WTC11 (cell line): ENCODE measurements at regions of chr12 and their contacts with region 1.

Region 1: GRCh38 chr12:52121824-52122539 is 42.5 kb downstream of the SMIM41 start:
- DNase-seq: peak; percentile 84
- ATAC-seq: peak; percentile 4; the same call in 1 of the 2 replicates
- H3K4me3 Mint-ChIP-seq: peak overlapping the region; percentile 50
- H3K27ac Mint-ChIP-seq: no peak overlapping the region
- H3K4me1 Mint-ChIP-seq: peaks cover 84% of the 10 kb centered on the region
- H3K27me3 Mint-ChIP-seq: peaks cover 7% of the 10 kb centered on the region; the same call in 1 of the 2 replicates
- CTCF ChIP-seq: peak; percentile 63

Region 2: DNA sequence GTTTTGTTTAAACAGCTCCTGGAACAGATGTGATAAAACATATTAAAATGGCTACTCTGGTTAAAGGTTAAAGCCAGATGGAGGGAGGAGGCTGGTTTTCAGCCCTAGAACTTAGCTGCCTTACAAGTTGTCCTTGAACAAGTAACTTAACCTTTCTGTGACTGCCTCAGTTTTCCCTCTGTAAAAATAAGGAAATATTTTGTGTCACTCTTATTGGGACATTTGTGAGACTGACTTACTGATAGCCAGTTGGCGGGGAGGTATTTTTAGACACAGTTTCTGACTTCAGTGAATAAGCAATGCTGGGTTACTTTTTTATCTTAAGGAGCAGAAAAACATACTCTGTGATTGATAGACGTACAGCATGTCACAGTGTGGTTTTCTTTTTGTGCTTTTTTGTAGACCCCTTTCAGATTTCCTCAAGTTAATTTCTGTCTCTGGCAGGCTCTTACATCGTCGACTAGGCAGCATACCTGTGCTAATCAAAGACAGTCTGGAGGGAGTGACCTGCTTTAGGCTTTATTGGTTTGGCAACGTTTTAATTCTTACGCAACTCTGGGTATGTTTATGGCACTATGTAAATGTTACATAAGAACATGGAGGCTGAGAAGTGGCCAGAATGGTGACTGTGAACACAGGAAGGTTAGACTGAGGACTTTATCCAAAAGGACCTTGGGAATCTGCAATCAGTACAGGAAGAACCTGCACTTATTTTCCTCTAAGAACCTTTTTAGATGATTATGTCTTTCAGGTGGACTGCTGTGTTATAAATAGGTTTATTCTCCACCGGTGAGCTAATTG is 167.2 kb before region 1 on chr12:
- CTCF ChIA-PET with region 1: no interaction called
- POLR2A ChIA-PET with region 1: no interaction called
- DNase-seq: no peak
- ATAC-seq: no peak
- H3K4me3 Mint-ChIP-seq: no peak overlapping the region
- H3K27ac Mint-ChIP-seq: no peak overlapping the region
- H3K4me1 Mint-ChIP-seq: peaks cover 23% of the 10 kb centered on the region
- H3K27me3 Mint-ChIP-seq: peaks cover 38% of the 10 kb centered on the region
- CTCF ChIP-seq: no peak

Region 3: DNA sequence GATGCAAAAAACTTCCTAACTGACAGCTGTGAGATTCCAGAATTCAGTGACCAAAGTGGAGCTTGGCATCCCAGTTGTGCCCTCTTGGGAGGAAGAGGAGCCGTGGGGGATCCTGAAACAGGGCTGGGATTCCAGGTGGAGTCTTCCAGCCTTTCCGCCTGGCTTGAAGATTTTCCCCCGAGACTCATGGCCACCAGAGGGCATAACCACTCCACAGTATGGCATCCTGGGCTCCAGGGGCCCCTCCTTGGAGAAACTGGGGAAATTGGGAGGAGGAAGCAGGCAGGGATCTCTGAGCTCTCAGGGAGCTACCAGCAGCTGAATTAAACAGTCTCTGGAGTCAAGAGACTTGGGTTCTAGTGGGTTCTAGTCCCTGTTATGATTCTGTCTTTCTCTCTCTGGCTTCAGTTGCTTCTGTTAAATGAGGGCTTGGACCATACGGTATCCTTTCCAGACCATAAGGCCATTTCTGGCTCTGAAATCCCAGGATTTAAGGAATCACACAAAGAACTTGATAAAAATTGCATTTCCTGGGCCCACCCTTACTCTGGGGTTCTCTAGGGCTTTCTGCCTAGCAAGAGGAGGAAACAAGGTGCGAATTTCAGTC is 117.8 kb before region 1 on chr12:
- CTCF ChIA-PET with region 1: interaction called, 16 read pairs
- POLR2A ChIA-PET with region 1: interaction called, 4 read pairs
- DNase-seq: peak; percentile 74
- ATAC-seq: peak; percentile 39
- H3K4me3 Mint-ChIP-seq: no peak overlapping the region
- H3K27ac Mint-ChIP-seq: no peak overlapping the region
- H3K4me1 Mint-ChIP-seq: peaks cover 20% of the 10 kb centered on the region
- H3K27me3 Mint-ChIP-seq: peaks cover 47% of the 10 kb centered on the region
- CTCF ChIP-seq: peak; percentile 42

Region 4: GRCh38 chr12:52069327-52070184 is 52.4 kb before region 1 on chr12 and contains the start of gene ATG101:
- CTCF ChIA-PET with region 1: interaction called, 20 read pairs
- POLR2A ChIA-PET with region 1: interaction called, 4 read pairs
- DNase-seq: peak; percentile 91
- ATAC-seq: peak; percentile 98
- H3K4me3 Mint-ChIP-seq: peak within 1 kb of the TSS; percentile 97
- H3K27ac Mint-ChIP-seq: peak within 1 kb of the TSS; percentile 99
- H3K4me1 Mint-ChIP-seq: peaks cover 14% of the 10 kb centered on the region
- H3K27me3 Mint-ChIP-seq: peaks cover 9% of the 10 kb centered on the region
- CTCF ChIP-seq: no peak
- total RNA-seq, gene ATG101: 43.3 to 52.1 TPM (median 45.0 TPM) in 3 replicates

Region 5: DNA sequence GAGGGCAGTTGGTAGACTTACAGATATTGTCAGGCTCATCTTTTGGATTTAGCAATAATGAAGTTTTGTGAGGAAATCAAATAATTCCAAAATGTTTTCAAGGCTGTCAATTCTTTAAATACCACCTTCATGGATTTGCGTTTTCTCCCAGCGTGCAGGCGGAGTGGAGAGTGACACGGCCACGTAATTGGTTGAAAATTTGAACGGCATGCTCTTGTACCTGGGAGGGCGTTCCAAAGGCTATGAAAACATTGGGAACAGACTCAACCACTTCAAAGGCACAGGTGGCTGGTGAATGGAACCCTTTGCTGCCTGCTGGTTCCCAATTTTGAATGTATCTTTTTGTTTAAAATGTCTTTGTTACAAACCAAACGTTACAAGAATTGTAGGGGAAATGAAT is 30.1 kb before region 1 on chr12:
- CTCF ChIA-PET with region 1: interaction called, 19 read pairs
- POLR2A ChIA-PET with region 1: interaction called, 3 read pairs
- DNase-seq: no peak
- ATAC-seq: no peak
- H3K4me3 Mint-ChIP-seq: no peak overlapping the region
- H3K27ac Mint-ChIP-seq: no peak overlapping the region
- H3K4me1 Mint-ChIP-seq: peaks cover 14% of the 10 kb centered on the region
- H3K27me3 Mint-ChIP-seq: no peaks in the 10 kb centered on the region
- CTCF ChIP-seq: no peak

Region 6: DNA sequence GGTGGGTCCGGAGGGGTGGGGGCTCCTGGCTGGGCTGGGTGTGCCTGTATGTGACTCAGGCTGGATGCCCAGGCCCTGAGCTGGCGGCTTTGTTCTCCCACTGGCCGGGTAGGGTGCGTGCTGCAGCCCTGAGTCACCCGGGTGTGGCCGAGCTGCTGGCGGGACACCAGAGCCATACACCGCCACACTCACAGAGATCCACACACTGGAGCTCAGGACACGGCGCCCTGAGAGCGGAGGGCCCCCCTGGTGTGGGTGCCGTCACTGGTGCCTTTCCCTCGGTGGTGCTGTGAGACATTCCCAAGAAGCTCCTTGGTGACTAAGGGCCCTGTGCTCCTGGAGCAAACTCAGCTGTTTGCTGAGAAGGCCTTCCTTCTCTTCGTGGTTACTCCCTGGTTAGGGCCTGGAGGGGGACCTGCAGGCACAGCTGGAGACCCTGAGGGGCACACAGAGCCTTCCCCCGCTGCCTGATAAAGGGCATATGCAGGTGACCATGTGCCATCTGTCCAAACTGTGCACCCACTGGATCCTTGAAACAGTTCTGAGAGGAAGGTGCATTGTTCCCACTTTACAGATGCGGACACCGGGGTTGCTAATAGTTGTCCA is 25.5 kb after region 1 on chr12:
- CTCF ChIA-PET with region 1: interaction called, 27 read pairs
- POLR2A ChIA-PET with region 1: interaction called, 3 read pairs
- DNase-seq: no peak
- ATAC-seq: no peak
- H3K4me3 Mint-ChIP-seq: no peak overlapping the region
- H3K27ac Mint-ChIP-seq: no peak overlapping the region
- H3K4me1 Mint-ChIP-seq: peaks cover 33% of the 10 kb centered on the region
- H3K27me3 Mint-ChIP-seq: no peaks in the 10 kb centered on the region
- CTCF ChIP-seq: no peak